Caco-2 (cell line): ENCODE measurements at regions of chr13 and their contacts with region 1.

Region 1: GRCh38 chr13:40777166-40777808 is 6.3 kb upstream of the MRPS31 start:
- DNase-seq: peak in 1 of 2 experiments; percentile 73
- H3K4me3 ChIP-seq: peak overlapping the region; percentile 28
- H3K4me3 Mint-ChIP-seq: peak overlapping the region; percentile 39
- H3K27ac Mint-ChIP-seq: no peak overlapping the region
- H3K4me1 ChIP-seq: peaks cover 19% of the 10 kb centered on the region
- H3K4me1 Mint-ChIP-seq: peaks cover 13% of the 10 kb centered on the region
- H3K27me3 ChIP-seq: no peaks in the 10 kb centered on the region
- H3K27me3 Mint-ChIP-seq: no peaks in the 10 kb centered on the region
- CTCF ChIP-seq: peak; percentile 82 to 92

Region 2: DNA sequence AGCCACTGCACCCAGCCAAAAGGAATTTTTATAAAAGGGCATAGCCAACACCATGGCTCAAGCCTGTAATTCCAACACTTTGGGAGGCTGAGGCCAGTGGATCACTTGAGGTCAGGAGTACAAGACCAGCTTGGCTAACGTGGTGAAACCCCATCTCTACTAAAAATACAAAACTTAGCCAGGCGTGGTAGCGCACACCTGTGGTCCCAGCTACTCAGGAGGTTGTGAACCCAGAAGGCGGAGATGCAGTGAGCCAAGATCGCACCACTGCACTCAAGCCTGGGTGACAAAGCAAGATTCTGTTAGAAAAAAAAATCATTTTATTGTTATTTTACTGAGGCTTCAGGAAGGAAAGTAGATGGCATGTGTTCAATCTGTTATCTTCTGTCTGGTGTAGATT is 79.6 kb before region 1 on chr13:
- CTCF ChIA-PET with region 1: no interaction called
- POLR2A ChIA-PET with region 1: no interaction called
- intact Hi-C with region 1: no loop called
- DNase-seq: no peak
- H3K4me3 ChIP-seq: no peak overlapping the region
- H3K4me3 Mint-ChIP-seq: no peak overlapping the region
- H3K27ac Mint-ChIP-seq: no peak overlapping the region
- H3K4me1 ChIP-seq: no peaks in the 10 kb centered on the region
- H3K4me1 Mint-ChIP-seq: no peaks in the 10 kb centered on the region
- H3K27me3 ChIP-seq: no peaks in the 10 kb centered on the region
- H3K27me3 Mint-ChIP-seq: no peaks in the 10 kb centered on the region
- CTCF ChIP-seq: no peak

Region 3: DNA sequence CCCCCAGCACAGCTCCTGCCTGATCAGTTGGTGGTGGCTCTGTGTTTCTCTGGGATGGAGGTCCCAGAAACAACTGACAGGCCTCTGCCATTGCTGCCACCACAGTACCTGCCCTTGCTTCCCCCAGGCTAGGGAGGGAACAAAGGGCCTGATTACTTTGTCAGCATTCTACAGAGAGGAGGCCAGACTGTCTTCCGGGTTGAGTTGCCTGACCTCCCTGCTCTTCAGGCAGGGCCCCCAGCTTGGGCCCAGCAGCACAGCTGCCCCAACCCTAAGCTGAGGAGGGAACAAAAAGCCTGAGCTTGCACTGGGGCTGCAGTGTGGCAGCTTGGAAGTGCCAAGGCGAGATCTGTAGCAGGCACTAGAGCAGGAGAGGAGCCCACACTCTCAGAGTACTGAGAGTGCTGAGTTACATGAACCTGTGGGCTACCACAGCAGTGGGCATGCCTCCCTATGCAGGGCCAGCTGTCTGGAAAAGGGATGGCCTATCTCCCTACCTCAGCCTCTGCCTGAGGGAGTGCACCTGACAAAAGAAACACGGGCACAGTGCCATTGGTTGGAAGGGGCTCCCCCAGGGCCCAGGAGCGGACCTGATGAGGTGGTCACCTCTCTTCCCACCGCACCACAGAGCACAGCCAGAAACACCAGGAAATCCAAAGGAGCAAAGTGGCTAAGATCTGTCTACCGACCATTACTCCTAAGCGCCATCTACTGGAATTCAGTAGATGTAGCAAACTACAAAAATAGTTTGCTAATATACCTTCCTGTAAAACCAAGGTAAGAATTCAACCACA is 36.6 kb after region 1 on chr13:
- CTCF ChIA-PET with region 1: no interaction called
- POLR2A ChIA-PET with region 1: no interaction called
- intact Hi-C with region 1: loop called (anchors 1 kb)
- DNase-seq: peak in 1 of 2 experiments; percentile 19
- H3K4me3 ChIP-seq: no peak overlapping the region
- H3K4me3 Mint-ChIP-seq: no peak overlapping the region
- H3K27ac Mint-ChIP-seq: no peak overlapping the region
- H3K4me1 ChIP-seq: no peaks in the 10 kb centered on the region; the same call in 1 of the 2 replicates
- H3K4me1 Mint-ChIP-seq: no peaks in the 10 kb centered on the region
- H3K27me3 ChIP-seq: no peaks in the 10 kb centered on the region
- H3K27me3 Mint-ChIP-seq: no peaks in the 10 kb centered on the region
- CTCF ChIP-seq: peak; percentile 58 to 67

Region 4: DNA sequence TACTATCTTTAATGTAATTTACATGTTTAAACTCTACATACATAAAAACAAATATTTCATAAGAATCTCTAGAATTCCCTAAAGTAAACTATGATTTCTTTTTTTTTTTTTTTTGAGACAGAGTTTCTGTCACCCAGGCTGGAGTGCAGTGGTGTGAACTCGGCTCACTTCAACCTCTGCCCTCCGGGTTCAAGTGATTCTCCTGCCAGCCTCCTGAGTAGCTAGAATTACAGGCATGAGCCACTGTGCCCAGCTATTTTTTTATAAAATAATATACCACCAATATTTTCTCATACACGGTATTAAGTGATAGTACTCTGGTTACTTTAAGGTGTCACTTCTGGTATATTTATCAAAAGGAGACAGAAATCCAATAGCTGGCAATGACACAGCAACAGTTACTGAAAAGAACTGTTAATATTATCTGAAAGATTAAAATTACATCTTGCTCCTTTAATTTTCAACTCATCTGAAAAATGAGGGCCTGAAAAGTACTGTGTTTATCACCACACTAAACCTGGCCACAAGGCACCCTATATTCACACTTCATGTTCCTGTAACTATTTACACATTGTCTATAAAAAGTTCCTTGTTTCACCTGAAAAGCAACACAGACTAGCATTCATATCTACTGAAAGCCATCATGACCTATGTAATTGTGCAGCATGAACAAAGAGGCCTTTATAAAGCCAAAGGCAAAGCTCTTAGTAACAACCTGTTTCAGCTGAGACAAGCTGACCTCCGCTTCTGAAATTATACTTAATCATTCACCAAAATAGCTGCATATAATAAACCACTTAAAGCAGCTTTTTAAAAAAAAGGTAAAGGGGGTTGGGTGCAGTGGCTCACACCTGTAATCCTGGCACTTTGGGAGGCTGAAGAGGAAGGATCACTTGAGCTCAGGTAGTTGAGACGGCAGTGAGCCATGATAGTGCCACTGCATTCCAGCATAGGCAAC is 118.2 kb after region 1 on chr13:
- CTCF ChIA-PET with region 1: no interaction called
- POLR2A ChIA-PET with region 1: no interaction called
- intact Hi-C with region 1: no loop called
- DNase-seq: peak in 1 of 2 experiments; percentile 15
- H3K4me3 ChIP-seq: no peak overlapping the region
- H3K4me3 Mint-ChIP-seq: no peak overlapping the region
- H3K27ac Mint-ChIP-seq: peak overlapping the region; percentile 60
- H3K4me1 ChIP-seq: no peaks in the 10 kb centered on the region
- H3K4me1 Mint-ChIP-seq: peaks cover 7% of the 10 kb centered on the region
- H3K27me3 ChIP-seq: no peaks in the 10 kb centered on the region
- H3K27me3 Mint-ChIP-seq: no peaks in the 10 kb centered on the region
- CTCF ChIP-seq: no peak

Region 5: DNA sequence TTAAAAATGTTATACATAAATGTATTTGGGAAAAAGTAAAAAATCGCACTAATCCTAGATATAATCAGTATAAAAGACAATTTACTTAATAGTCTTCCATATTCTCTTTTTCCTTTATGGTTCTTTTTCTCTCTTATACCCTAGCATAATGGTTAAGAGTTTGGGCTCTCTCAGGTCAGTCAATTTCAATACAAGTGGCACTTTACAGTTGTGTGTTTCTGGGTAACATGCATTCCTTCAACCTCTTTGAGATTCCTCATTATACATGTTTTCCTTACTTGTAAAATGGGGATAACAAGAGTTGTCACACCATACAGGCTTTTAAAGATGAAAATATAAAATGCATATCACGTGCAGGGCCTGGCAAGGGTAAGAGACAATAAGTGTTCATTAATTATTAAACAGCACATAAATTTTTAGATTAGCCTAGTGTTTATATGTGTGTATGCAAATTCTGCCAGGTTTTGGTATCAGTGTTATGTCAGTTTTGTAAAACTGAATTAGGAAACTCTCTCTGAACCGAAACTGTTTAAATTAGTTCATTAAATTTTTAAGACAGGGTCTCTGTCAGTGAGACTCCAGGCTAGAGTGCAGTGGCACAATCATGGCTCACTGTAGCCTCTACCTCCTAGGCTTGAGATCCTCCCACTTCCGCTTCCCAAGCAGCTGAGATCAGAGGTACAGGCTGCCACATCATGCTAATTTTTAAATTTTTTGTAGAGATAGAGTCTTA is 192.0 kb after region 1 on chr13:
- CTCF ChIA-PET with region 1: no interaction called
- POLR2A ChIA-PET with region 1: no interaction called
- intact Hi-C with region 1: no loop called
- DNase-seq: no peak
- H3K4me3 ChIP-seq: no peak overlapping the region
- H3K4me3 Mint-ChIP-seq: no peak overlapping the region
- H3K27ac Mint-ChIP-seq: peak overlapping the region; percentile 58
- H3K4me1 ChIP-seq: peaks cover 63% of the 10 kb centered on the region
- H3K4me1 Mint-ChIP-seq: peaks cover 49% of the 10 kb centered on the region
- H3K27me3 ChIP-seq: no peaks in the 10 kb centered on the region
- H3K27me3 Mint-ChIP-seq: no peaks in the 10 kb centered on the region
- CTCF ChIP-seq: no peak